GM10248 (cell line): ENCODE measurements at regions of chr3 and their contacts with region 1.

Region 1: GRCh38 chr3:48256557-48256956 is 15.7 kb downstream of the ZNF589 start:
- DNase-seq: no peak
- CTCF ChIP-seq: no peak

Region 2: GRCh38 chr3:48222616-48223513 is 33.7 kb before region 1 on chr3 and contains the start of gene CAMP:
- CTCF ChIA-PET with region 1: no interaction called
- POLR2A ChIA-PET with region 1: interaction called, 13 read pairs
- DNase-seq: peak; percentile 84
- CTCF ChIP-seq: no peak

Region 3: DNA sequence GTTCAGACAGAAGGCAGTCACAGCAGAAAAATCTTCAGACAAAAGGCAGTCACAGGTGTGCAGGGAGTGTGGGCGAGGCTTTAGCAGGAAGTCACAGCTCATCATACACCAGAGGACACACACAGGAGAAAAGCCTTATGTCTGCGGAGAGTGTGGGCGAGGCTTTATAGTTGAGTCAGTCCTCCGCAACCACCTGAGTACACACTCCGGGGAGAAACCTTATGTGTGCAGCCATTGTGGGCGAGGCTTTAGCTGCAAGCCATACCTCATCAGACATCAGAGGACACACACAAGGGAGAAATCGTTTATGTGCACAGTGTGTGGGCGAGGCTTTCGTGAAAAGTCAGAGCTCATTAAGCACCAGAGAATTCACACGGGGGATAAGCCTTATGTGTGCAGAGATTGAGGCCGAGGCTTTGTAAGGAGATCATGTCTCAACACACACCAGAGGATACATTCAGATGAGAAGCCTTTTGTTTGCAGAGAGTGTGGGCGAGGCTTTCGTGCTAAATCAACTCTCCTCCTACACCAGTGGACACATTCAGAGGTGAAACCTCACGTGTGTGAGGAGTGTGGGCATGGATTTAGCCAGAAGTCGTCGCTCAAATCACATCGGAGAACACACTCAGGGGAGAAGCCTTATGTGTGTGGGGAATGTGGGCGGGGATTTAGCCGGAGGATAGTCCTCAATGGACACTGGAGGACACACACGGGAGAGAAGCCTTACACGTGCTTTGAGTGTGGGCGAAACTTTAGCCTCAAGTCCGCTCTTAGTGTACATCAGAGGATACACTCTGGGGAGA is 12.0 kb after region 1 on chr3:
- CTCF ChIA-PET with region 1: interaction called, 23 read pairs
- POLR2A ChIA-PET with region 1: no interaction called
- DNase-seq: no peak
- CTCF ChIP-seq: no peak